A549 (cell line): ENCODE measurements at regions of chr7 and their contacts with region 1.

Region 1: DNA sequence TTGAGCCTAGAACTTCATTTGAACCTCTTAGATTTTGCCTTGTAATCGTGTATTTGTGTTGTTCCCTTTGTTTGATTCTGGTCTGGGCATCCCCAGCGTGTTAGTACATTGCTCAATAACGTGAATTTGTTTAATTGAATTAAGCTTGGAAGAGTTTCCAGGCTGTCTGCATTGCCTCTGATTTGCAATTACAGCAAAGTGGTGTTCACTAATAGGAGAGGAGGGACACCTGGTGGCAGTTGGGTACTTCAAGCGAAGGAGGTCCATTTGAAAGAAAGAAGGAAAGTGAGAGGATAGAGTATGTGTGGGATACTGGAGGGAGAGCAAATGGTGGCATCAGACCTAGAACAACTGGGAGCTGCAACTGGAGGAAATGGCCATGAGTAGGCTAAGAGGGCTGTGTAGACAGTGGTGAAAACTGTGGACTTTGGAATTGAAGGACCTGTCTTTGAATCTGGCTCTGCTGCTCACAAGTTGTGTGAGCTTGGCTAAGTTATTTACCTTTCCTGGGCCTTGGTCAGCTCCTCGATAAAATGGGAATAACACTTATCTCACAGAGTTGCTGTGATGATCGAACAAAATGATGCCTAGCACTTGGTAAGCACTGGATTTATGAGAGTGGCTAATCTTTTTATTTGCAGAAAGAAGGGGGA is 15.1 kb downstream of the LSMEM1 start:
- DNase-seq: peak; percentile 45 to 69
- ATAC-seq: peak; percentile 83 to 92
- H3K4me3 ChIP-seq: no peak overlapping the region
- H3K27ac ChIP-seq: no peak overlapping the region
- H3K4me1 ChIP-seq: no peaks in the 10 kb centered on the region
- CTCF ChIP-seq: peak; percentile 75
- EP300 ChIP-seq: no peak
- POLR2A ChIP-seq: no peak
- RAD21 ChIP-seq: peak; percentile 84 to 92

Region 2: DNA sequence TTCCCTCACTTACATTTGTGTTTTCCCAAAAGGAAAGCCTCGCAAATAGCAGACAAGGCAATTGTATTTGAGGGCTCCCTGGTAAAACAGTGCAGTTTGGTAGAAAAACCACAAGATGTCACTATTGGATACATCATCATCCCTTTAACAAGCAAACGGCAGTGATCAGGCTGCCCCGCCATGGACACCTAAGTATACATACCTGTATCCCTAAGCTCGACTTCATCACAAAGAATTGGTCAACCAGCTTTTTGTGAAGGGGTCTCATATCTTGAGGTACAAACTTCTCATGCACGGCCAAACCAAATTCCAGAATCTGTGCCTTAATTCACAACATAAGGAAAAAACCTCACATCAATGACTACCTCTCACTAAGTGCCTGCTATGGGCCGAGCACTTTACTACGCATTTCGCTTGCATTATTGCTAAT is 754.1 kb before region 1 on chr7:
- CTCF ChIA-PET with region 1: interaction called, 16 read pairs
- POLR2A ChIA-PET with region 1: no interaction called
- DNase-seq: peak; percentile 80 to 82
- ATAC-seq: peak; percentile 89 to 94
- H3K4me3 ChIP-seq: no peak overlapping the region
- H3K27ac ChIP-seq: no peak overlapping the region
- H3K4me1 ChIP-seq: no peaks in the 10 kb centered on the region
- CTCF ChIP-seq: peak; percentile 89
- EP300 ChIP-seq: no peak
- POLR2A ChIP-seq: no peak
- RAD21 ChIP-seq: peak; percentile 84 to 86

Region 3: DNA sequence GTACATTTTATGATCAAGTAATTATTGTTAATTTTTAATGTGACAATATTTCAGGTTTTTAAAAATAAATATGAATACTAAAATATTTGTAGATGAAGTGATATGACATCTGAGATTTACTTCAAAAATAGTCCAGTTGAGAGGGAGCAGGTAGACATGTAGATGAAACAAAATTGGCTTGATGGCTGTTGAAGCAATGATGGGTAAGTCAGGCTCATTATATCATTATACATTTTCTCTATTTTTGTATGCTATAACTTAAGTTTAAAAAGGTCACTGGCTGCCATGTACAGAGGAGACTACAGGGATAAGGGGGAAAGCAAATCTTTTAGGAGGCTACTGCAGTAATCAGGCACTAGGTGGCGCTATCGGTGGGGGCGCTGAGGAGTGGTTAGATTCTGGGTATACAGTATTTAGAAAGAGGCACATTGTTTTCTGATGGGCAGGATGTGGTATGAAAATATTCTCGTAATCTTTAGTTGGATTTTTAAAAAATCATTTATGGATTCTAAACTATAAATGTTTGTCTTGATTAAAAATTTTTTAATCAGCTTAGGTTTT is 743.8 kb before region 1 on chr7:
- CTCF ChIA-PET with region 1: interaction called, 16 read pairs
- POLR2A ChIA-PET with region 1: no interaction called
- DNase-seq: peak; percentile 52
- ATAC-seq: peak; percentile 91 to 97
- H3K4me3 ChIP-seq: no peak overlapping the region
- H3K27ac ChIP-seq: no peak overlapping the region
- H3K4me1 ChIP-seq: no peaks in the 10 kb centered on the region
- CTCF ChIP-seq: peak; percentile 84
- EP300 ChIP-seq: no peak
- POLR2A ChIP-seq: no peak
- RAD21 ChIP-seq: peak; percentile 56 to 67

Region 4: GRCh38 chr7:112481833-112482670 is 13.9 kb before region 1 on chr7:
- CTCF ChIA-PET with region 1: interaction called, 13 read pairs
- POLR2A ChIA-PET with region 1: no interaction called
- DNase-seq: peak; percentile 39 to 77
- ATAC-seq: peak; percentile 73 to 76
- H3K4me3 ChIP-seq: no peak overlapping the region
- H3K27ac ChIP-seq: peak overlapping the region in 1 of 2 experiments; percentile 11; a peak in 1 of 6 replicates
- H3K4me1 ChIP-seq: peaks cover 44% of the 10 kb centered on the region
- CTCF ChIP-seq: no peak
- EP300 ChIP-seq: no peak
- POLR2A ChIP-seq: no peak
- RAD21 ChIP-seq: no peak

Region 5: GRCh38 chr7:112510001-112510742 is 14.2 kb after region 1 on chr7:
- CTCF ChIA-PET with region 1: interaction called, 12 read pairs
- POLR2A ChIA-PET with region 1: no interaction called
- DNase-seq: no peak
- ATAC-seq: peak; percentile 37 to 52; a peak in 3 of 6 replicates
- H3K4me3 ChIP-seq: no peak overlapping the region
- H3K27ac ChIP-seq: no peak overlapping the region
- H3K4me1 ChIP-seq: no peaks in the 10 kb centered on the region
- CTCF ChIP-seq: no peak
- EP300 ChIP-seq: no peak
- POLR2A ChIP-seq: no peak
- RAD21 ChIP-seq: no peak

Region 6: DNA sequence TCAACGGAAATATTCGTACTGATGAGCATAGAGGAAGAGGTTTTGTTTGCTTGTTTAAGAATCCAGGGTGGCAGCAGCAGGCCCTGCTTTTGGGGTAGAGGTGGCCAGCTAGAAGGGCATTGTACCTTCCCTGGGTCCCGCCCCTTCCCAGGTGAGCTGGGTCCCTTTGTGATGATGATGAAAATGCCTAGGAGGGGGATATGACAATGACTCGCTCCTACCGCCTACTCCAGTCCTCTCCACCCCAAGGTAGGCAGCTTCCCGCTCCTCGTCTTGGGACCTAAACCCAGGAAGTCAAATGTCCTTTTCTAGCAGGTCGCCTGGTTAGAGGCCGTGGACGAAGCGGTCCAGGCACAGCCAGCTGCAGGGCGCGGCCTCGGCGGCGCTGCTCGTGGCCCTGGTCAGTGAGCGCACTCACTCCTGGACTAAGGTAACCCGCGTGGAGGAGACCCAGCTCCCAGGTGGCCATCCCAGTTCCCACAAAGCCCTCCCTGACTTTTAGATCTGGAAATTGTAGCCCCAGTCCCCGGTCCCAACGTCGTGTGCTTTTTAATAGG is 126.3 kb after region 1 on chr7:
- CTCF ChIA-PET with region 1: no interaction called
- POLR2A ChIA-PET with region 1: no interaction called
- DNase-seq: no peak
- ATAC-seq: no peak
- H3K4me3 ChIP-seq: no peak overlapping the region
- H3K27ac ChIP-seq: no peak overlapping the region
- H3K4me1 ChIP-seq: no peaks in the 10 kb centered on the region
- CTCF ChIP-seq: no peak
- EP300 ChIP-seq: no peak
- POLR2A ChIP-seq: no peak
- RAD21 ChIP-seq: no peak